ENCODE measurements at regions of chr6 and their contacts with region 1.

Region 1: DNA sequence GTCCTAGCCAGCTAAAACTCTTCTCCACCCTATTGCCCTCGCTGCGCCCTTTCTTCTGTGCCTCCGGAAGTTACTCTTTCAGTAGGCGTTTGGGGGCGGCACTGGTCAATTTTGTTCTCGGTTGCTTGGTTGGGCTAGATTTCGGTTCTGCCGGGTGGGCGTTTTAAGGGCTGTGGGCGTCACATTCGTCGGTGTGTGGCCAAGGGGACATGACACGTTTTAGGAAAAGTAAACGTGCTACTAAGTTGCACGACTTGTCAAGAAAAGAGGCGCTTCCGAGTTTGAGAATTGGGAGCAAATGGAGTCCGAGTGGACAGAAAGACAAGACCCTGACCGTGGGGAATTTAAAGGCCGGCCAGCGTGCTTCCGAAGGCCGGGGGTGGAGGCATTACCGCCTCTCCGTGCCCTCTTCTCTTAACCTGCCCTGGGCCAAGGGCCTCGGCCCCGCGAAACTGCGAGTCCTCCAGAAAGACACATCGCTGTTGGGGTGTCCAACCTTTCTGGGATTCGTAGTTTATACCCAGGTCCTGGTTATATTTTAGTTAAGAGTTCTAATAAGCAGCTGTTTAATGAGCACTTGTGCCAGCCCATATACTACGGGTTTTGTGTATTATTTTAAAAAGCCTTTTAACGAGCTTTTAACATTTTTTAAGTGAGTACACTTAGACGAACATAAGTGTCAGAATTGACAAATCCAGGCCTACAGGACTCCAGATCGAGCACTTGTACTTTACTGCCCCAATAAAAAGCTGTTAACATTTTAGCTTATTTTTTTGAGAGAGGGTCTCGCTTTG is 661 bp upstream of the BAG6 start:
- DNase-seq: peak; percentile 91
- ATAC-seq: peak; percentile 71
- H3K4me3 Mint-ChIP-seq: peak overlapping the region; percentile 88
- H3K27ac Mint-ChIP-seq: peak overlapping the region; percentile 96
- H3K4me1 Mint-ChIP-seq: peaks cover 38% of the 10 kb centered on the region
- H3K27me3 Mint-ChIP-seq: no peaks in the 10 kb centered on the region

Region 2: GRCh38 chr6:31493875-31494694 is 159.0 kb before region 1 on chr6:
- CTCF ChIA-PET with region 1: interaction called, 9 read pairs
- POLR2A ChIA-PET with region 1: no interaction called
- intact Hi-C with region 1: loop called in 1 of 2 experiments (anchors 1 kb)
- DNase-seq: peak; percentile 91
- ATAC-seq: peak; percentile 58
- H3K4me3 Mint-ChIP-seq: peak overlapping the region; percentile 79
- H3K27ac Mint-ChIP-seq: peak overlapping the region; percentile 90
- H3K4me1 Mint-ChIP-seq: peaks cover 43% of the 10 kb centered on the region
- H3K27me3 Mint-ChIP-seq: no peaks in the 10 kb centered on the region

Region 3: GRCh38 chr6:31795616-31796298 is 142.6 kb after region 1 on chr6 and contains the start of gene VARS1:
- CTCF ChIA-PET with region 1: no interaction called
- POLR2A ChIA-PET with region 1: interaction called, 3 read pairs
- intact Hi-C with region 1: loop called in 1 of 2 experiments (anchors 1 kb)
- DNase-seq: peak; percentile 92
- ATAC-seq: peak; percentile 82
- H3K4me3 Mint-ChIP-seq: peak within 1 kb of the TSS; percentile 95
- H3K27ac Mint-ChIP-seq: peak within 1 kb of the TSS; percentile 95
- H3K4me1 Mint-ChIP-seq: peaks cover 47% of the 10 kb centered on the region
- H3K27me3 Mint-ChIP-seq: no peaks in the 10 kb centered on the region
- total RNA-seq, gene VARS1: 147 to 169 TPM

Region 4: DNA sequence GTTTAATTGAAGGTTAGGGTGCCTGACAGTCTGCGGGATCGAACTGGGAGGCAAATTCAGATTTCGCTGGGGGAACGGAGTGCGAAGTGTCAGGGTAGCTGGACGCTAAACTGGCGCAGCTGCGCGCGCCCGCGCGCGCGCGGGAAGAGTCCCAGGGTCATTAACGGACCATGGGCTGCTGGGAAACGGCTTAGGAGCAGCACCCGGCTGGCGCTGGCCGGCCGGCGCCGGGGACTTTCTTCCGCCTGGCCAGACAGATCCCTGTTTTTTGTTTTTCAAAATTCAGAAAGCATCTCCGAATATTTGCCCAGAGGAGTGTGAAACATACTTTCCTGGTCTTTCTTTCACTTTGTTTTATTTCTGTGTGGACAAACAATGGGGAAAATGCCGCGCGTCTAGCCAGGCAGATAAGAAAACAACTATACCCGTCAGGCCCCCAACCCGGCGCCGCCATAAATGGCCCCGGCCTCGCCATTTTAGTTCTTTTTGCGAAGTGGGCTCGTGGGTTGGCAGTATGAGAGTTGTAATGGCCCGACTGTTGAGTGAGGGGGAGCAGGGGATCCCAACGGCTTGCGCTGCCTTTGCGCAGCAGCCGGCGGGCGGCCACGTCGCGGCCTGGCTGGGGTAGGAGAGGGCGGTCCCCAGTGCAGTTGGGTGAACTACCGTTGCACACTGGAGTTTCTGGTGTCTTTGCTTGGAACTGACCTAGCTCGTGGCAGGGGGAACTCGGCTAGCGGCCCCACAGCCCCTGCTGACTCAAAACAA is 181.5 kb after region 1 on chr6:
- CTCF ChIA-PET with region 1: interaction called, 4 read pairs
- POLR2A ChIA-PET with region 1: no interaction called
- intact Hi-C with region 1: loop called in 1 of 2 experiments (anchors 2 kb)
- DNase-seq: peak; percentile 85
- ATAC-seq: peak; percentile 63
- H3K4me3 Mint-ChIP-seq: peak overlapping the region; percentile 90
- H3K27ac Mint-ChIP-seq: peak overlapping the region; percentile 95
- H3K4me1 Mint-ChIP-seq: peaks cover 40% of the 10 kb centered on the region
- H3K27me3 Mint-ChIP-seq: no peaks in the 10 kb centered on the region

Region 5: DNA sequence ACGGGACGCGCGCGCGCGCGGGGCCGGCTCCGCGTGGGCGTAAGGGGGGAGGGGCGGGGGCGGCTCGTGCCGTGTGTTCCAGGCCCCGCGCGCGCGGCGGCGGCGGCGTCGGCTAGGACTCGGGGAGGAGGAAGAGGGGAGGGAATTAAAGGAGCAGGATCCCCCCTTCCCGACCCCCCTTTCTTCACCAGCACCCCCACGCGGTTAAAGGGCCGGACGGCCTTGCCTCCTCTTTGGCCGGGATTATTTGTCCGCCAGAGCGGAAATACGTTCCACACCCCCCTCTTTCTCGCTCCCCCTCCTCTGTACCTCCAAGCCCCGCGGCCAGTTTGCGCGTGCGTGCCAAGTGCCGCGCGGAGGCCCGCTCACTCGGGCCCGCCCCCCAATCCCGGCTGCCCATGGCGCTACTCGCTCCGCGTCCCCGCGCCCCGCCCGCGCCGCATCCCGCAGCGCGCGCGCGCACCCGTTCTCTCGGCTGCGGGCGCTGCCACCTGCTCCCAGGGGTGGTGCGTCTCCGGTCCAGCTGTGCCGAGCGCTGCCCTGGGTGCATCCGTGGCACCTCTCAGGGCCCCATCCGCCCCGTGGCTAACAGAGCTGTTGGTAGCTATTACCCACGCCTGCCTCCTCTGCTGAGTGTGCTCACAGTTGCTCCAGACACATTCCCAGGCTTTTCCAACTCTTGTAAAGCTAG is 249.0 kb after region 1 on chr6 and contains the start of gene ZBTB12:
- CTCF ChIA-PET with region 1: no interaction called
- POLR2A ChIA-PET with region 1: no interaction called
- intact Hi-C with region 1: loop called in 1 of 2 experiments (anchors 1 kb)
- DNase-seq: peak; percentile 92
- ATAC-seq: peak; percentile 63
- H3K4me3 Mint-ChIP-seq: peak within 1 kb of the TSS; percentile 69
- H3K27ac Mint-ChIP-seq: peak within 1 kb of the TSS; percentile 78
- H3K4me1 Mint-ChIP-seq: peaks cover 25% of the 10 kb centered on the region
- H3K27me3 Mint-ChIP-seq: no peaks in the 10 kb centered on the region
- total RNA-seq, gene ZBTB12: 1.9 to 2.4 TPM